H1 (cell line): ENCODE measurements at regions of chr13 and their contacts with region 1.

Region 1: DNA sequence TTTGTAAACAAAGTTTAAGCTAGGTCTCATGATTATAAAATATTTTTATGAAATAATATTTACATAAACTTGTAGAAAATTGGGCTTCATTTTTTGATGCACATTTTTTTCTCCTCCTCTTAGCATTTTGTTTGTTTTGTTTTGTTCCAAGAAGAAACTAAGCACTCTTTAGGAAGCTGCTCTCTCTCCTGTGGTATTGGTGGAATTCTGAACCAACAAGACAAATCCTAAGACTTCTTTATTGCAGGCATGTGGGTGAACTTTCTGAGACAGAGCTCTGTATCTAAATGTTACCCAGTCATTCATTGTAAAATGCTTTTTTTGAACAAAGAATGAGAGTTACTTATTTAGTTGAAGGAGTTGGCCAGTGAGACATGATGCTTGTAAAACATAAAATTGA is 39.3 kb downstream of the LMO7 start:
- DNase-seq: no peak
- H3K4me3 ChIP-seq: no peak overlapping the region
- H3K27ac ChIP-seq: no peak overlapping the region
- H3K4me1 ChIP-seq: 0 out of 7 replicates have a peak, but pooled peaks cover 0 to 3% (median 0%) of the 10 kb centered on the region in 4 experiments
- H3K27me3 ChIP-seq: no peaks in the 10 kb centered on the region
- CTCF ChIP-seq: no peak
- EP300 ChIP-seq: no peak
- POLR2A ChIP-seq: no peak
- RAD21 ChIP-seq: no peak

Region 2: GRCh38 chr13:75687150-75687763 is 11.8 kb after region 1 on chr13:
- CTCF ChIA-PET with region 1: interaction called, 29 read pairs
- POLR2A ChIA-PET with region 1: no interaction called
- DNase-seq: no peak
- H3K4me3 ChIP-seq: no peak overlapping the region
- H3K27ac ChIP-seq: no peak overlapping the region
- H3K4me1 ChIP-seq: peaks cover 2 to 7% (median 5%) of the 10 kb centered on the region in 4 experiments; a peak in 6 of 7 replicates
- H3K27me3 ChIP-seq: no peaks in the 10 kb centered on the region
- CTCF ChIP-seq: peak in 2 of 3 experiments; percentile 42 to 51; a peak in 2 of 4 replicates
- EP300 ChIP-seq: no peak
- POLR2A ChIP-seq: no peak
- RAD21 ChIP-seq: peak; percentile 64 to 65

Region 3: DNA sequence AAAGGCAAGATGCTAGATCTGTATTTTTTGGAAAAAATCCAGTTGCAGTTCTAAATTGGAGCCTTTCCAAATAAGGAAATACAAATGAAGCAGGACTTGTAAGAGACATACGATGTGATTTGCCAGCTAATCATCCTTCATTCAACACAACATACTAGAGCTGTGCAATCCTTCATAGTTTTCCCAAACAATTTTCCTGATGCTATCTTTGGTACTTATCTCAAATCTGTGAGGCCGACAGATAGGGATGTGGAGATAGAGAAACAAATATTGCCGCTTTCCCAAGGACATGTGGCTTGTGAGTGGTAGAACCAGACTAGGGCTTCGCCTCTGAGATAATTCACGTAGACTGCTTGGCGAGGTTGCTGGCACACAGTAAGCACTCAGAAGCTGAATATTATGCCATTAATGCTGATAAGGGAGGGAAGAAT is 137.3 kb after region 1 on chr13:
- CTCF ChIA-PET with region 1: no interaction called
- POLR2A ChIA-PET with region 1: no interaction called
- DNase-seq: no peak
- H3K4me3 ChIP-seq: no peak overlapping the region
- H3K27ac ChIP-seq: no peak overlapping the region
- H3K4me1 ChIP-seq: no peaks in the 10 kb centered on the region
- H3K27me3 ChIP-seq: no peaks in the 10 kb centered on the region
- CTCF ChIP-seq: no peak
- EP300 ChIP-seq: no peak
- POLR2A ChIP-seq: no peak
- RAD21 ChIP-seq: no peak